Esophagus squamous epithelium (tissue), 5 donors: ENCODE measurements at regions of chr19 and their contacts with region 1.

Region 1: GRCh38 chr19:39846176-39846677 is at the start of gene FBL:
- DNase-seq: peak; percentile 71
- H3K4me3 ChIP-seq: peak within 1 kb of the TSS; percentile 63 to 92 (median 78)
- H3K27ac ChIP-seq: peak within 1 kb of the TSS; percentile 80 to 91 (median 88)
- H3K4me1 ChIP-seq: peaks cover 6 to 56% (median 39%) of the 10 kb centered on the region in 3 donors
- H3K27me3 ChIP-seq: no peaks in the 10 kb centered on the region
- CTCF ChIP-seq: peak in 1 of 6 experiments; percentile 16
- POLR2A ChIP-seq: peak in 2 of 4 donors; percentile 26 to 69
- total RNA-seq, gene FBL: 184 to 226 (median 193) TPM

Region 2: DNA sequence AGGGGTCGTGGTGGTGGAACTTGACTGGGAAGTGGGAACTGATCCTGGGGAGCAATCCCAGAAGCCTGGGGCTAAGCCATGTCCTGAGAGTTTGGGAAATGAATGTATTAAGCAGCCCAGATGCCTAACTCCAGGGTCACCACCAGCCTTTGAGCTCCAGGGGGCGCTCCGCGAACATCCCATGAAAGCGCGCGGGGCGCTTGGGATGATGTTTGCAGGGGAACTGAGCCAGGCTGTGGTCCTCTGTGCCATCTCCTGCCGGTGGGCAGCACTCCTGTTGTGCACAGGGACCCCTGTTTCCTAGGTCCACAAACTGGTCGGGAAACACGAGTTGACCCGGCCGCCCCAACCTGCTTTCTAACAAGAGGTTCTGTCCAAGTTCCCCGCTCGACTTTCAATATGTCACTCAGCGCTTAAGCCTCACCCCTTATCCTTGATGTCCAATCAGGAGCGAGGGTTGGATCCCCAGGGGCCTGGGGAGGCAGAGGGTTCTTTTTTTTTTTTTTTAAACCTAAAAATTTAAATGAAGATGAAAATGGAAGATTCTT is 53.2 kb before region 1 on chr19:
- intact Hi-C with region 1: loop called (anchors 10 kb)
- DNase-seq: no peak
- H3K4me3 ChIP-seq: peak overlapping the region; percentile 7 to 62 (median 47)
- H3K27ac ChIP-seq: no peak overlapping the region
- H3K4me1 ChIP-seq: peaks cover 0 to 7% (median 0%) of the 10 kb centered on the region in 3 donors
- H3K27me3 ChIP-seq: peaks cover 0 to 15% (median 0%) of the 10 kb centered on the region in 4 donors
- CTCF ChIP-seq: peak; percentile 78 to 89 (median 83)
- POLR2A ChIP-seq: no peak